ENCODE measurements at regions of chr3 and their contacts with region 1.

Region 1: GRCh38 chr3:32510075-32510724 is 7.5 kb upstream of the CMTM6 start:
- DNase-seq: peak; percentile 87

Region 2: GRCh38 chr3:32667122-32667521 is 156.9 kb after region 1 on chr3:
- intact Hi-C with region 1: loop called (anchors 2 kb)
- DNase-seq: no peak